Activated T-helper 2 cell treated with anti-CD3 and anti-CD28 coated beads, Interferon-gamma antibody, Interleukin-2, Interleukin-4, amounts not matched to agents 10 μg/mL and 5 μg/mL and 100 μg/mL, durations not matched to agents 14 hours and 24 hours and 36 hours (primary cell): ENCODE measurements at regions of chr19 and their contacts with region 1.

Region 1: DNA sequence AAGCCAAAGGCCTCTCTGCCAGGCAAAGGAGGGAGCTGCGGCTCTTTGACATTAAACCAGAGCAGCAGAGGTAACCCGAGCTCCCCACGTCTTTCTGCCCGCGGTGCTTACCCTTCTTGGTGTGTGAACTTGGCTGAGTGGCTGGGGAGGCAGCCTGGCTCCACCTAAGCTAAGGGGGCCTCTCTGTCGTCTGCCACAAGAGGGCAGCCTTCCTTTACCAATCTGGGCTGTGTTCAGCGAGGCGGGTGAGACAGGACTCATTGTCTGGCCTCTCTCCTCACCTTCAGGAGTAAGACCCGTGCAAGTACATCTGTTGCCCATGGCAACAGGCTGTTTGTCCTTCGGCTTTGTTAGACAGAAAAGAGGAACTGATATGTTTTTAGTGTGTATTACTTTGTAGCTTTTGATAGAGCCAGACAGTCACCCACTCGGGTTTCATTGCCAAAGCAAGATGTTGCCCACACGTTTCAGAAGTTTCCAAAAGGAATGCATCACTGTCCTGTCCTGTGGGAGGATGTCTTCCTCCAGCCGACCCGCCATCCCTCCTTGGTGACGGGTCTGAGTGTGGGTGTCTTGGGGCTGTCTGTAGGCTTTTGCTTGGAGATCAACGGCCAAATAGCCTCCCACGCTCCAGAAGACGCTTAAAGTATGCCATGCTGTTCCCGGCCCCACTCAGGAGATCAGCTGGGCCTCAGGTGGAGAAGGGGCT is 4.6 kb downstream of the POP4 start:
- DNase-seq: peak; percentile 78
- H3K4me3 Mint-ChIP-seq: no peak overlapping the region
- H3K27ac Mint-ChIP-seq: peak overlapping the region; percentile 44
- H3K4me1 Mint-ChIP-seq: peaks cover 9% of the 10 kb centered on the region
- H3K27me3 Mint-ChIP-seq: no peaks in the 10 kb centered on the region

Region 2: GRCh38 chr19:29212648-29213573 is 397.8 kb before region 1 on chr19 and contains the start of gene UQCRFS1:
- intact Hi-C with region 1: loop called (anchors 5 kb)
- DNase-seq: peak; percentile 95
- H3K4me3 Mint-ChIP-seq: peak within 1 kb of the TSS; percentile 97
- H3K27ac Mint-ChIP-seq: peak within 1 kb of the TSS; percentile 97
- H3K4me1 Mint-ChIP-seq: peaks cover 32% of the 10 kb centered on the region
- H3K27me3 Mint-ChIP-seq: no peaks in the 10 kb centered on the region
- total RNA-seq, gene UQCRFS1: 44.6 and 44.8 TPM in 2 replicates

Region 3: DNA sequence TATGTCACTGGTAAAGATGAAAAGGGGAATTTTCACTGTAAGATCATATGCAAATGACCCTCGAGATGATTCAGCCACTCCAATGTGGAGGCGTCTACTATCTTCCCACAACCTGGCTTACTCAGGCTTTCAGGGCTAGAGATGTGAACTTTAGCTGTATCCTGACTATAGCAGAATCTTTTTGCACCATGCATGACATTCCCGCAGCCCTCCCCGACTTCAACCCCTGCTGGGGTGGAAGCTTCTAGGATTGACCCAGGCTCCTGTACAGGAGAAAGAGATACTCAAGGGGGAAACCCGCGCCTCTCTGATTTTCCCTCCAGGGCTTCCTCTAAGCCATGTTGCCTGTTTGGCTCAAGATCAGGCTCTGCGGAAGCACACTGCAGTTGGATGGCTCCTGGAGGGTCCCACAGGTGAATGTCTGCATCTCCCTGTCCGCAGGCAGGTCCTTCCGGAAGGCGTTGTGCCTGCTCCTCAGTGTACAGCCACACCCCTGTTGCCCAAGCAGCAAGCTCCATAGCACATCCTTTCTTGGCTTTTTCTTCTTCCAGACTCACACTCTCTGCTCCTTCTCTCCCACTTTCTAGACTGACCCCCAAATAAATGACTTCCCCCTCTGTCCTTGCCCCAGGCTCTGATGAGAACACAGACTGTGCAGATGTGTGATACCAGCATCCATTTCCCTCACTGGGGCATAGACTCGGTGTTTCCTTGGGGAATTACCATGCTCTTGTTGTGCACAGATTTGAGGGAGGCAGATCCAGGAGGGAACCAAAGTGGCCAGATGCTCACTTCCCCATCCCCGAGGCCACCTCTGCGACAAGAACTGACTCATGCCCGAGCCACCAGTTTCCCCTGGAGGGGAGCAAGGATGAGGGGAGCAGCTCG is 33.7 kb before region 1 on chr19:
- intact Hi-C with region 1: loop called (anchors 2 kb)
- DNase-seq: no peak
- H3K4me3 Mint-ChIP-seq: no peak overlapping the region
- H3K27ac Mint-ChIP-seq: no peak overlapping the region
- H3K4me1 Mint-ChIP-seq: peaks cover 34% of the 10 kb centered on the region
- H3K27me3 Mint-ChIP-seq: peaks cover 41% of the 10 kb centered on the region

Region 4: GRCh38 chr19:29622138-29623070 is 11.7 kb after region 1 on chr19:
- intact Hi-C with region 1: loop called (anchors 2 kb)
- DNase-seq: no peak
- H3K4me3 Mint-ChIP-seq: no peak overlapping the region
- H3K27ac Mint-ChIP-seq: peak overlapping the region; percentile 38
- H3K4me1 Mint-ChIP-seq: peaks cover 46% of the 10 kb centered on the region
- H3K27me3 Mint-ChIP-seq: no peaks in the 10 kb centered on the region

Region 5: GRCh38 chr19:29671393-29672160 is 60.9 kb after region 1 on chr19:
- intact Hi-C with region 1: loop called (anchors 2 kb)
- DNase-seq: peak; percentile 78
- H3K4me3 Mint-ChIP-seq: peak overlapping the region; percentile 67
- H3K27ac Mint-ChIP-seq: peak overlapping the region; percentile 87
- H3K4me1 Mint-ChIP-seq: peaks cover 67% of the 10 kb centered on the region
- H3K27me3 Mint-ChIP-seq: no peaks in the 10 kb centered on the region

Region 6: DNA sequence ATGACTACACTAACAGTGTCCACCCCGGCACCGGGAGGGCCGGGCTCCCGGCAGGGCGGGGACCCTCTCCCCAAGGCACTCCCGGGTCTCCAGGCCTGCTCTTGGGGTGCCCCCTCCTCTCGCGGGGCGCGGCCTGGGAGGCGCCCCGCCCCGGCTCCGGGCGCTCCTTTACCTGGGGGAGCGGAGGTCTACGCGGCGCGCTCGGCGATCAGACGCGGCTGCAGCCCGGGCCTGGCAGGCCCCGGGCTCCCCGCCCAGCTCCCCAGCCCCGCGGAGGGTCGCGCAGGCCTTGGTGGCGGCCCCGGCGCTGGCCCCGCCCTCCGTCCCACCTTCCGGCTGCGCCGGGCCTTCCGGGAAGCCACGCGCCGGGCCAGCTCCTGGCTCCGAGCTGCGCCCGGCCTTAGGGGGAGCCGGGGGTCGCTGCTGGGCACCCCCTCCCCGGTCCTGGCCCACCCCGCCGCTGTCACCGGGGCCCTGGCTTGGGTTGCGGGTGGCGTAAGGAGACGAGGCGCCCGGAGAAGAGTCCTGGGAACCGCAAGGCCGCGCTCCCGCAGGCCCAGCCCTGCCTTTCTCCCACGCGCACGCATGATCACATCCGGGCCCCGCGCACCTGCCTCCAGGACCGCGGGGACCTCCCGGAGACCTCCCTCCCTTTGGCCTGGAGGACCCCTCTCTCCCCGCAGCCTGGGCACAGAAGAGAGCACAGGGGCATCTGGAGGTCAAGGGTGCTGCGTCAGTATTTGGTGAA is 104.4 kb after region 1 on chr19 and contains the start of gene C19orf12:
- intact Hi-C with region 1: loop called (anchors 1 kb)
- DNase-seq: peak; percentile 71
- H3K4me3 Mint-ChIP-seq: peak within 1 kb of the TSS; percentile 94
- H3K27ac Mint-ChIP-seq: peak within 1 kb of the TSS; percentile 94
- H3K4me1 Mint-ChIP-seq: peaks cover 45% of the 10 kb centered on the region
- H3K27me3 Mint-ChIP-seq: no peaks in the 10 kb centered on the region
- total RNA-seq, gene C19orf12: 41.9 and 42.2 TPM in 2 replicates

Region 7: GRCh38 chr19:29941828-29942403 is 331.2 kb after region 1 on chr19 and contains the start of gene URI1:
- intact Hi-C with region 1: loop called (anchors 10 kb)
- DNase-seq: peak; percentile 90
- H3K4me3 Mint-ChIP-seq: peak within 1 kb of the TSS; percentile 90
- H3K27ac Mint-ChIP-seq: peak within 1 kb of the TSS; percentile 88
- H3K4me1 Mint-ChIP-seq: peaks cover 38% of the 10 kb centered on the region
- H3K27me3 Mint-ChIP-seq: no peaks in the 10 kb centered on the region
- total RNA-seq, gene URI1: 55.6 and 56.8 TPM in 2 replicates